ENCODE measurements at regions of chr14 and their contacts with region 1.

Region 1: GRCh38 chr14:90903101-90903500 is 86.9 kb upstream of the TTC7B start:
- DNase-seq: peak in 8 of 10 donors; percentile 46 to 86 (median 60)
- H3K4me3 ChIP-seq: no peak overlapping the region
- H3K27ac ChIP-seq: peak overlapping the region in 20 of 59 donors; percentile 2 to 64 (median 23)
- H3K27me3 ChIP-seq: no peaks in the 10 kb centered on the region
- CTCF ChIP-seq: peak; percentile 47 to 94 (median 83)

Region 2: GRCh38 chr14:90892970-90893369 is 10.1 kb before region 1 on chr14:
- intact Hi-C with region 1: no loop called
- DNase-seq: no peak
- H3K4me3 ChIP-seq: no peak overlapping the region
- H3K27ac ChIP-seq: peak overlapping the region in 9 of 59 donors; percentile 3 to 60 (median 28)
- H3K27me3 ChIP-seq: no peaks in the 10 kb centered on the region
- CTCF ChIP-seq: no peak

Region 3: DNA sequence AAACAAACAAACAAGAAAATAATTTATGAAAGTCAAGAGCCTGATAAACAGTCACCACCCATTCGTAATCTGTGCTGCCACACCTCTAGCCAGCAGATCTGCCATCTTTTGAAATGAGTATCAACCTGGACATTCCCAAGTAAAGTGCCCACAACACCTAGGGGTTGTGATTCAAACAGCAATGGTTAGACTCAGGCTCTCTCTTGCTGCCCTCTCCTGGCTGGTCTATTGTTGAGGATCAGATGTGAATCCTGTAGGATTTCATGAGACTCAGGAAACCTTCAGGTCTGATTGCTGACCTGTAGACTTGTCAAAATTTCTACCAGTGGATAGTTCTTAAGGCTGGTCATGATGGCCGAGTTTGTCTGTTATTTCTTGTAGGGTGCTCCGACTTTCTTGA is 237.6 kb after region 1 on chr14:
- intact Hi-C with region 1: loop called in 1 of 2 experiments (anchors 1 kb)
- DNase-seq: peak in 3 of 10 donors; percentile 42 to 70 (median 67)
- H3K4me3 ChIP-seq: no peak overlapping the region
- H3K27ac ChIP-seq: peak overlapping the region in 1 of 59 donors; percentile 29
- H3K27me3 ChIP-seq: no peaks in the 10 kb centered on the region
- CTCF ChIP-seq: peak; percentile 28 to 79 (median 60)

Region 4: DNA sequence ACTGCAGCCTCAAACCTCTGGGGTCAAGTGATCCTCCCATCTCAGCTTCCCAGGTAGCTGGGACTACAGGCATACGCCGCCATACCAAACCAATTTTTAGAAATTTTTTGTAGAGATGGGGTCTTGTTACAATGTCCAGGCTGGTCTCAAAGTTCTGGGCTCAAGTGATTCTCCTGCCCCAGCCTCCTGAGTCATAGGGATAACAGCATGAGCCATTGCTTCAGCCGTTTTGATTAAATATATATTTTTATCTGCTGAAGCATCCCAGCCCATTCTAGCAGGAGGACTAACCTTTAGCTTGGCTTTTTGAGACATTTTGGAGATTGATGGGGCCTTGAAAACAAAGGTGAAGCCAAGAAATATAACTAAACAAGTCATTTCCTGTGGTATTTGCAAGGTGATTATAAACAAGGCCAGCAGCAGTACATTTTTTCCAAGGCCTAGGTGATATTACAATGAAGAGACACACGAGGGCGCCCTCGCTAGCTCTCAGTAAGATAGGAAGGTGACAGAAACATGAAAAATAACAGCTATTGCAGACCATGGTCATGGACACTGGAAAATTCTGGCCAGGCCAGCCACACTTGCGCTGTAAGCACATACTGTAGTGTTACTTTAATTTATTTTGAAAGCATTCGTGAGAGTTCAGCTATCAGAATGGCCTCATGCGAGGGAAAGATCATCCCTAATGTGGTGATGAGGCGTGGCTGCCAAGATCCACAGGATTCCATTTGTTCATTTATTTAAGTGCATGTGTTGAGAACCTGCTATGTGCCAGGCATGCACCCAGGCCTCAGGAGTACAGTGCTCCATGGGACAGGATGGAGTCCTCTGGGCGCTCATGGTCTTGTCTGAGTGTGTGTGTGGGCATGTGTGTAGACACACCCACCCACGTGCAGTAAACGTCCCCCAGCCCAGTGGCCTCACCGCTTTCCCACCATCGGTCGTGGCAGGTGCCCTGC is 274.3 kb after region 1 on chr14:
- intact Hi-C with region 1: loop called (anchors 1 to 2 kb)
- DNase-seq: peak in 1 of 10 donors; percentile 39
- H3K4me3 ChIP-seq: no peak overlapping the region
- H3K27ac ChIP-seq: peak overlapping the region in 2 of 59 donors; percentile 25 to 61
- H3K27me3 ChIP-seq: no peaks in the 10 kb centered on the region
- CTCF ChIP-seq: peak in 55 of 56 donors; percentile 36 to 80 (median 68)

Region 5: GRCh38 chr14:91286530-91286937 is 383.4 kb after region 1 on chr14:
- intact Hi-C with region 1: loop called (anchors 5 kb)
- DNase-seq: peak; percentile 26 to 87 (median 71)
- H3K4me3 ChIP-seq: no peak overlapping the region
- H3K27ac ChIP-seq: no peak overlapping the region
- H3K27me3 ChIP-seq: peaks cover 0 to 2% (median 0%) of the 10 kb centered on the region in 45 donors
- CTCF ChIP-seq: peak; percentile 73 to 97 (median 91)